Activated naive CD8-positive, alpha-beta T cell treated with anti-CD3 and anti-CD28 coated beads, Interleukin-2, amount 10 ng/mL, durations not matched to agents 7 days and 5 days (primary cell): ENCODE measurements at regions of chr14 and their contacts with region 1.

Region 1: GRCh38 chr14:93115069-93115820 is 480 bp downstream of the ITPK1 start:
- DNase-seq: peak; percentile 93
- ATAC-seq: peak; percentile 87
- H3K4me3 Mint-ChIP-seq: peak overlapping the region; percentile 92
- H3K27ac Mint-ChIP-seq: peak overlapping the region; percentile 85
- H3K4me1 Mint-ChIP-seq: peaks cover 22% of the 10 kb centered on the region
- H3K27me3 Mint-ChIP-seq: no peaks in the 10 kb centered on the region

Region 2: DNA sequence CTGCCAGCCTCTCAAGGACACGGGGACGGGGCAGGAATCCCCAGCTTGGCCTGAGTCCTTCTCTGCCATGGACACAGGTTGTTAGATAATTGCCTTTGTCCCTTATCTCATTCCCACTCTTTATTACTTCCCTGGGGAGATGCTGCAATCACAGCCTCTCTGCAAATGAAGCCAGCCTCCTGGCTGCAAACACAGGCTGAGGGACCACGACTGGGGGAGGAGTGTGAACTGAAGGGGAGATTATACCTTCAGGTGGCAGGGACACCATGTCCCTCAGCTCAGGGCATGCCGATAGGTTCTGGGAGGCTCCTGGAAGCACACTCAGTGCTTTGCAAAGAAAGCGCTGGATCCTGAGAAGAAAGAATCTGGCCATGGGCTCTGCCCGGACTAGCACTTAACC is 208.4 kb before region 1 on chr14:
- POLR2A ChIA-PET with region 1: no interaction called
- DNase-seq: no peak
- ATAC-seq: no peak
- H3K4me3 Mint-ChIP-seq: no peak overlapping the region
- H3K27ac Mint-ChIP-seq: no peak overlapping the region
- H3K4me1 Mint-ChIP-seq: peaks cover 14% of the 10 kb centered on the region
- H3K27me3 Mint-ChIP-seq: peaks cover 10% of the 10 kb centered on the region

Region 3: DNA sequence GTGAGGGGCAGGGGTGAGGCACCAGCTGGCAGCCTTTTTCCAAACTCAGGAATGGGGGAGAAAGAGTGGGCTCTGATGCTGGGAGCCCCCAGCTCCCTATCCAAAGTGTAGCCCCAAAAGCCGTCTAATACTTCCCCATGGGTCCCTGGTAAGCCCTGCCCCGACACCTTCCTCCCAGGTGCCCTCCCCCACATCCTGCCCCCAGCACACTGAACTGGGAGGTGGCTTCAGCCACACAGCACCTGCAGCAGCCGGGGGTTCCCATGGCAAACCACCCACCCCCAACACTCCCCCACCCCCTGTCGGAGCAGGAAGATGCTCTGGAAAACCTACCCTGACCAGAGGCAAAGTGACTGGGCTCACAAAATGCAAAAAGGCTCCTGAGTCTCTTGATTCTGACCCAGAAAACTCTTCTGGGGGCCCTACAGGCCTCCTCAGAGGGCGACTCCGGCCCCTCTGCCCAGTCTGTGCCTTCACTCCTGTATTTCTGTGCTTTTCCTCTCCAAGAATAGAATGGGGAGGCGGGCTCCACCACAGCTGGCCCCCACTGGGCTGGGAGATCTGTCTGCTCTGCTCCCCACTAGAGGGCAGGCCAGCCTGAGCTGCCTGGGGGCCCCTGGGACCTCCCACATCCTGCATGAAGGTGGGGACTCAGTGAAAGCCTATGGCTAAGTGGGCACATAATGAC is 81.1 kb before region 1 on chr14:
- POLR2A ChIA-PET with region 1: interaction called, 18 read pairs
- DNase-seq: peak; percentile 77
- ATAC-seq: peak; percentile 93
- H3K4me3 Mint-ChIP-seq: peak overlapping the region; percentile 80
- H3K27ac Mint-ChIP-seq: peak overlapping the region; percentile 94
- H3K4me1 Mint-ChIP-seq: peaks cover 38% of the 10 kb centered on the region
- H3K27me3 Mint-ChIP-seq: no peaks in the 10 kb centered on the region

Region 4: DNA sequence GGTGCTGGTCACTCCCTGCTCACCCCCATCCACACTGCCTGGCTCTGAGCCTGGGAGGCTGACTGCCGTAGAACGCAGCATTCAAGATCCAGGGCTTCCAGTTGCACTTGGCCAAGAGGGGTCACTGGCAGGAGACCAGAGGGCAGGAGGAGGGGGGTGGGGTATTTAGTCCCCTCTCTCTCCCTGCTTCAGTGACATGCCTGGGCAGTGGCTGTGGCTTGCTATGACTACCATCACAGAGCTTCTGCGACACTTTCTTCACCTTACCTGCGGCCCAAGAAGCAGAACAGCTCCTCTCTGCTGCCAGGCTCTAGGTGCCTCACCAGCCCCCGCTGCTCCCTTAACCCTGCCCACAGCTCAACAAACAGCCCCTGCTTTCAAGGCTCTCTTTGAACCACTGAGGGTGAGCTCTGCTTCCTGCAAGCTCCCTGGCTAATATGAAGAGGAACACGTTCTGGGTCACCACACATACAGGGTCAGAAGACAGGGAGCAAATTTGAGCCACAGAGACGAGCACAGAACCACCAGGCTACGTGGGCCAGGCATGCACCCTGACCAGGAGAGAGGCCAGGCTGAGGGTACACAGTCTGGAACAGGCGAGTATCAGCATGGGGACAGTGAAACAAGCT is 55.2 kb before region 1 on chr14:
- POLR2A ChIA-PET with region 1: interaction called, 38 read pairs
- DNase-seq: peak; percentile 60
- ATAC-seq: peak; percentile 95
- H3K4me3 Mint-ChIP-seq: peak overlapping the region; percentile 67
- H3K27ac Mint-ChIP-seq: peak overlapping the region; percentile 93
- H3K4me1 Mint-ChIP-seq: peaks cover 45% of the 10 kb centered on the region
- H3K27me3 Mint-ChIP-seq: no peaks in the 10 kb centered on the region

Region 5: GRCh38 chr14:93103392-93104080 is 11.7 kb before region 1 on chr14:
- POLR2A ChIA-PET with region 1: interaction called, 20 read pairs
- DNase-seq: peak; percentile 74
- ATAC-seq: peak; percentile 98
- H3K4me3 Mint-ChIP-seq: peak overlapping the region; percentile 90
- H3K27ac Mint-ChIP-seq: peak overlapping the region; percentile 97
- H3K4me1 Mint-ChIP-seq: peaks cover 45% of the 10 kb centered on the region
- H3K27me3 Mint-ChIP-seq: no peaks in the 10 kb centered on the region

Region 6: GRCh38 chr14:93184388-93185353 is 69.4 kb after region 1 on chr14 and contains the starts of genes LYSET and MOAP1:
- POLR2A ChIA-PET with region 1: interaction called, 16 read pairs
- DNase-seq: peak; percentile 91
- ATAC-seq: peak; percentile 91
- H3K4me3 Mint-ChIP-seq: peak within 1 kb of the TSS; percentile 97
- H3K27ac Mint-ChIP-seq: peak within 1 kb of the TSS; percentile 92
- H3K4me1 Mint-ChIP-seq: peaks cover 26% of the 10 kb centered on the region
- H3K27me3 Mint-ChIP-seq: no peaks in the 10 kb centered on the region
- total RNA-seq, gene LYSET: 11.9 to 12.7 TPM
- total RNA-seq, gene MOAP1: 31.6 TPM

Region 7: GRCh38 chr14:93811676-93812075 is 696.4 kb after region 1 on chr14:
- POLR2A ChIA-PET with region 1: no interaction called
- DNase-seq: no peak
- ATAC-seq: no peak
- H3K4me3 Mint-ChIP-seq: no peak overlapping the region
- H3K27ac Mint-ChIP-seq: no peak overlapping the region
- H3K4me1 Mint-ChIP-seq: no peaks in the 10 kb centered on the region
- H3K27me3 Mint-ChIP-seq: peaks cover 2% of the 10 kb centered on the region